ENCODE measurements at regions of chr11 and their contacts with region 1.

Region 1: DNA sequence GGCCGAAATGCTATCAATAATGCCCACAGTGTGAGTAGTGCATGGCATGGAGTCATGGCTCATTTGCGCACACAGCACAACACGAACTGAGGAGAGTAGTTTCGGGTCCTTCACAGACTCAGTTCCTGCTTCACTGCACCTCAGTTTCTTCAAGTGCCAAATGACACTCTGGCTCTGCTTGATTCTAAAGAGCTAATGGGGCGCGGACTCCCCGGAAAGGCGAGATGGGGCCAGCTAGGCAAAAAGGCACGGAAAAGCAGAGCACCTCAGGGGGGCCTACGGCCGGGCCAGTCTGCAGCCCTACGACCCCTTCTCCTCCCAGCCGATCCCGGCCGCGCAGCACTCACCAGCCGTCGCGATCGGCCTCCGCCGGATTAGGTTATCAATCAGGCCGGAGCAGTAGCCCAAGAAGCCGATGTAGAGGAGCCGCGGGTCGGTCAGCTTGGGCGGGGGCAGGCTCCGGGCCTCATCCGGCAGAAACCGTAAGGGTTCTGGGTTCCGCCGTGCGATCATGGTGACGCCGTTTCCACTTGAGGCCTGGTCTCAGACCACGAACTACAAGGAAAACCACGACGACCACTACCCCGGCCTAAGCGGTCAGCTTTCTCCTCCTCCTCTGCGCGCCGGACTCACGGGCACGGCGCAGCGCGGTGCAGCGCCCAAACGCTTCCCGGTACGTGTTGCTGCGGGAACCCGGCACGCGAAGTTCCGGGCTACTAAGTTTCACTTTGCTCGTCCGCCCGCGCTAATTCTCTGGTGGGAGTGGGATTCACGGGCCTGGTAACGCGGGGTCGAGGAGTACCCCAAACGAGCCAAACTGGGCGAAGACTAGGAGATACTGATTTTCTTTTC is at the start of gene NDUFC2:
- DNase-seq: peak; percentile 72 to 89 (median 81)
- H3K4me3 ChIP-seq: peak within 1 kb of the TSS; percentile 79
- H3K27ac ChIP-seq: peak within 1 kb of the TSS; percentile 65 to 68
- H3K4me1 ChIP-seq: peaks cover 19% of the 10 kb centered on the region
- H3K27me3 ChIP-seq: no peaks in the 10 kb centered on the region
- CTCF ChIP-seq: peak in 1 of 3 donors; percentile 16
- EP300 ChIP-seq: no peak
- POLR2A ChIP-seq: peak; percentile 52
- total RNA-seq, gene NDUFC2: 59.0 to 158 (median 127) TPM

Region 2: DNA sequence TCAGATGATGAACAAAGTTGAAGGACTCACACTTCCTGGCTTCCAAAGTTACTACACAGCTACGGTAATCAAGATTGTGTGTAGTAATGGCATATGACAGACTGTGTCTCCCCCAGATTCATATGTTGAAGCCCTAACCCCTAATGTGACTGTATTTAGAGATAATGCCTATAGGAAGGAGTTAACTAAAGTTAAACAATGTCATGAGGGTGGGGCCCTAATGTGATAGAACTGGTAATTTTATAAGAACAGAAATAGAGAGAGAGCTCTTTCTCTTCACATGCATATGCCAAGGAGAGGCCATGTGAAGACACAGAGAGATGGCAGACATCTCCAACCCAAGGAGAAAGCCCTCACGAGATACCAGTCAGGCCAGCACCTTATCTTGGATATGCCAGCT is 250.5 kb before region 1 on chr11:
- intact Hi-C with region 1: loop called in 1 of 4 experiments (anchors 5 kb)
- DNase-seq: no peak
- H3K4me3 ChIP-seq: no peak overlapping the region
- H3K27ac ChIP-seq: no peak overlapping the region
- H3K4me1 ChIP-seq: no peaks in the 10 kb centered on the region
- H3K27me3 ChIP-seq: no peaks in the 10 kb centered on the region
- CTCF ChIP-seq: no peak
- EP300 ChIP-seq: no peak
- POLR2A ChIP-seq: no peak

Region 3: GRCh38 chr11:78420255-78420764 is 340.9 kb after region 1 on chr11:
- intact Hi-C with region 1: no loop called
- DNase-seq: peak; percentile 68 to 86 (median 80)
- H3K4me3 ChIP-seq: no peak overlapping the region
- H3K27ac ChIP-seq: peak overlapping the region in 1 of 2 donors; percentile 14
- H3K4me1 ChIP-seq: peaks cover 12% of the 10 kb centered on the region
- H3K27me3 ChIP-seq: no peaks in the 10 kb centered on the region
- CTCF ChIP-seq: peak; percentile 29 to 65 (median 44)
- EP300 ChIP-seq: no peak
- POLR2A ChIP-seq: no peak

Region 4: DNA sequence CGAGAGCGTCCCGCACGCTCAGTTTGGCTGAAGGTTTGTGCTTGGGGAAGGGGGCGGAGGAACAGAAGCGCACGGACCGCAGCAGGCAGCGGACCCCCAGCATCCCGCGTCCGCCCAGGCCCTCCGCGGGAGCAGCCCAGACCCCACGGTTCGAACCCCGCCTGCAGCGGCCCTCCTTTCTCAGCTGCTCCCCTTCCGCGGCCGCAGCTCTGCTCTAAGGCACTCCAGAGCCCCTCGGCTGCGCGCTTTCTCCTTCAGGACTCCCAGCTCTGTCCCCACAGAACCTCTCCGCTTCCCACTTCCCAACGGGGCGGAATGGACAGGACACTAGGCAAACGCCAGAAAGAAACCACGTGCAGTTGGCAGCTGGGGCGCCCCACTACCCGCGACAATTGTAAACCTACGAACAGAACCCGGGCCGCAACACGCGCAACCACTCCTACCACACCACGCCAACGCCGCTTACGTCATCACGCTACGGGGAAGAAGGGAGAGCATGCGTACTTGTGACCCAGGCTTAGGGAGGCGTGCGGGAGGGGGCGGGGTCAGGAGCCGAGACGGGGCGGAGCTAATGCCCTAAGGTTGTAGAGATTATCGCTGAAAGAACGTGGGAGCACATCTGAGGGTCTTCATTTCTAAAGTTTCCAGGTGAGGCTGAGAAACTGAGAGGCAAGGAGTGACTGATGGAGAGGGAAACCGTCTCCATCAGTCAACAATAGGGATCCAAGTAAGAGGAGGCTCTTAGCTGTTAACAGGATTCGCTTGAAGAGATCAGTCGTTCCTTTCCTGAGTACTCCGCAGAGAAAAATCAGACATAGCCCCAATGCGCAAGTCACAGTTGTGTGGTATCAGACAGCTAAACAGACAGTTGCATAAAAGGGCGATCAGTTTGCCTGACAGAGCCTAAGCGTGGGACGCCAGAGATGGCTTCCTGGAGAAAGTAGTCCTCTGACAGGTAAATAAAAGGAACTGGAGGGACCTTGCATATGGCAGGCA is 495.2 kb after region 1 on chr11 and contains the start of gene NARS2:
- intact Hi-C with region 1: no loop called
- DNase-seq: peak; percentile 97 to 98 (median 98)
- H3K4me3 ChIP-seq: peak within 1 kb of the TSS; percentile 51
- H3K27ac ChIP-seq: peak within 1 kb of the TSS; percentile 55 to 83
- H3K4me1 ChIP-seq: peaks cover 6% of the 10 kb centered on the region
- H3K27me3 ChIP-seq: no peaks in the 10 kb centered on the region
- CTCF ChIP-seq: peak in 1 of 3 donors; percentile 8
- EP300 ChIP-seq: no peak
- POLR2A ChIP-seq: peak; percentile 97
- total RNA-seq, gene NARS2: 13.2 to 24.5 (median 17.3) TPM

Measured in ovary (tissue), 10 donors.